ENCODE measurements at regions of chr1 and their contacts with region 1.

Region 1: GRCh38 chr1:78676347-78676982 is 26.8 kb downstream of the IFI44 start:
- DNase-seq: peak; percentile 24
- ATAC-seq: 0 out of 2 replicates have a peak, but pooled peaks have one; percentile 66
- H3K4me3 ChIP-seq: no peak overlapping the region
- H3K27ac ChIP-seq: no peak overlapping the region
- H3K4me1 ChIP-seq: no peaks in the 10 kb centered on the region
- H3K27me3 ChIP-seq: no peaks in the 10 kb centered on the region; the same call in 1 of the 2 replicates
- CTCF ChIP-seq: peak; percentile 77; the same call in 1 of the 2 replicates

Region 2: DNA sequence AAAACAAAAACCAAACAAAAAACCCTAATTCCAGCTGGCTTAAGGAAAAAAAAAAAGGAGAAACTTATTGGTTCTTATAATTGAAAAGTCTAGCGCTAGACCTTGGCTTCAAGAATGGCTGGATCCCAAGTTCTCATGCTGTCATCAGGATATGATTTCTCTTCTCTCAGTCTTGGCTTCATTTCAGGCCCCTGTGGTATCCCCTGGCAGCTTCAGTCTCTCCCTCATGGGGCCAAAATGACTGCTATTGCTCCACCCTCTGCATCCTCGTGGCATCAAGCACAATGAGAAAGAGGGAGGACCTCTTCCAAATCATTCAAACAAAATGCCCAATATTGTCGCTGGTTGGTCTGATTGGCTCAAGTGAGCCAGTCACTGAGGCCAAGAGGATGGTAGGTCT is 550.0 kb before region 1 on chr1:
- CTCF ChIA-PET with region 1: interaction called, 11 read pairs
- POLR2A ChIA-PET with region 1: no interaction called
- in situ Hi-C with region 1: no loop called
- intact Hi-C with region 1: no loop called
- DNase-seq: no peak
- ATAC-seq: no peak
- H3K4me3 ChIP-seq: no peak overlapping the region
- H3K27ac ChIP-seq: no peak overlapping the region
- H3K4me1 ChIP-seq: no peaks in the 10 kb centered on the region
- H3K27me3 ChIP-seq: no peaks in the 10 kb centered on the region
- CTCF ChIP-seq: no peak

Region 3: GRCh38 chr1:78145105-78145580 is 531.3 kb before region 1 on chr1:
- CTCF ChIA-PET with region 1: no interaction called
- POLR2A ChIA-PET with region 1: no interaction called
- in situ Hi-C with region 1: no loop called
- intact Hi-C with region 1: loop called (anchors 5 kb)
- DNase-seq: peak; percentile 43
- ATAC-seq: peak; percentile 90
- H3K4me3 ChIP-seq: no peak overlapping the region
- H3K27ac ChIP-seq: no peak overlapping the region
- H3K4me1 ChIP-seq: no peaks in the 10 kb centered on the region
- H3K27me3 ChIP-seq: peaks cover 6% of the 10 kb centered on the region
- CTCF ChIP-seq: peak; percentile 91

Region 4: GRCh38 chr1:78617615-78618026 is 58.8 kb before region 1 on chr1:
- CTCF ChIA-PET with region 1: no interaction called
- POLR2A ChIA-PET with region 1: no interaction called
- in situ Hi-C with region 1: no loop called
- intact Hi-C with region 1: loop called (anchors 1 kb)
- DNase-seq: peak; percentile 63
- ATAC-seq: peak; percentile 83
- H3K4me3 ChIP-seq: no peak overlapping the region
- H3K27ac ChIP-seq: no peak overlapping the region
- H3K4me1 ChIP-seq: no peaks in the 10 kb centered on the region
- H3K27me3 ChIP-seq: no peaks in the 10 kb centered on the region
- CTCF ChIP-seq: peak; percentile 88

Measured in Panc1 (cell line).